WTC11 (cell line): ENCODE measurements at regions of chr3 and their contacts with region 1.

Region 1: DNA sequence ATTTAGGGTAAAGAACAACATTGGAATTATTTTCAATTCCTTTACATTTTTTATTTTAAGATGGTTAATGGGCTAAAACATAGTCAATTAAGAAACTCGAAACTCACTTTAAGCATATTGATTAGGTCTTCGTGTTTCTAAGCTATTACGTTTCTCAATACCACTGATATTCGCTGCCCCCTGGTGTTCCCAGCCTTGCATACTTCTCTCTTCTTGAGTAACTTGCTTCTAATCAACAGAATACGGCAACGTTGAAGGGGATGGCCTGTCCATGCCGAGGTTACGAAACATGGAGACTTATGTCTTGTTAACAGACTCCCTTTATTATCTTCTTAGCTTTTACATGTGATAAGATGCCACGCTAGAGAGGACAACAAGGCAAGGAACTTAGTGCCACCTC is 43.6 kb downstream of the ROBO1 start:
- DNase-seq: peak; percentile 53
- ATAC-seq: peak; percentile 59
- H3K4me3 Mint-ChIP-seq: no peak overlapping the region
- H3K27ac Mint-ChIP-seq: no peak overlapping the region
- H3K4me1 Mint-ChIP-seq: peaks cover 5% of the 10 kb centered on the region
- H3K27me3 Mint-ChIP-seq: no peaks in the 10 kb centered on the region
- CTCF ChIP-seq: no peak

Region 2: GRCh38 chr3:79521238-79521848 is 202.9 kb before region 1 on chr3:
- CTCF ChIA-PET with region 1: interaction called, 23 read pairs
- POLR2A ChIA-PET with region 1: no interaction called
- DNase-seq: no peak
- ATAC-seq: peak; percentile 41; the same call in 1 of the 2 replicates
- H3K4me3 Mint-ChIP-seq: no peak overlapping the region
- H3K27ac Mint-ChIP-seq: no peak overlapping the region
- H3K4me1 Mint-ChIP-seq: peaks cover 17% of the 10 kb centered on the region
- H3K27me3 Mint-ChIP-seq: no peaks in the 10 kb centered on the region
- CTCF ChIP-seq: peak; percentile 73

Region 3: DNA sequence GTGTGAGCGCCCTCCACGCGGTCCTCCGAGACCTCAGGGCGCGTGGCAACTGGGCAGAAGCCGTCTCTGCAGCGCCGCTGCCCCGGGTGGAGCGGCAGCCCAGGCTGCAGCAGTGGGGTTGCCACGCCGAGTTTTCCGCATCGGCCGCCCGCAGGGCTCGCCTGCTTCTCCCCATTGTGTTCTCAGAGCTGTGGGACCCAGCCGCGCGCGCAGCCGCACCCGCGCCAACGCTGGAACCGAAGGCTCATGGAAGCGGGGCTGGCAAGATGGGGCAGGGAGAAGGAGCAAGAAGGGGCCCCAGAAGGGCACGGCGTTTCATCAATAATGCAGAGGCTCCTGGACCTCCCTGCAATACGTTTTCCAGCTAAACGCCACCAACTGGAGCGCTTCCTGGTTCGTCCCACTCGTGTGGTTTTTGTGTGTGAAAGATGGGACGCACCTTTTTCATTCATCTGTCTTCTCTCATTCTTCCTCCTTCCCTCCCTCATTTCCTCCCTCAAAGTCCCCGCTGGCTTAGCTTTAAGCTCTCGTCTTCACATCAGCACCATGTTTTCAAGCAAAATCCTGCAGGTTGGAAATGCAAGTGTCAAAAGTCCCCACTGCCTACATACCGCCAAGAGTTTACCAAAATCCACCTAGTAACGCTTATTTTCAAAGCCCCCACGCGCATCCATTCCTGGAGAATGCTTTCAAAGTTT is 42.4 kb after region 1 on chr3:
- CTCF ChIA-PET with region 1: no interaction called
- POLR2A ChIA-PET with region 1: no interaction called
- DNase-seq: no peak
- ATAC-seq: peak; percentile 16
- H3K4me3 Mint-ChIP-seq: no peak overlapping the region
- H3K27ac Mint-ChIP-seq: no peak overlapping the region
- H3K4me1 Mint-ChIP-seq: peaks cover 15% of the 10 kb centered on the region
- H3K27me3 Mint-ChIP-seq: peaks cover 7% of the 10 kb centered on the region
- CTCF ChIP-seq: no peak

Region 4: DNA sequence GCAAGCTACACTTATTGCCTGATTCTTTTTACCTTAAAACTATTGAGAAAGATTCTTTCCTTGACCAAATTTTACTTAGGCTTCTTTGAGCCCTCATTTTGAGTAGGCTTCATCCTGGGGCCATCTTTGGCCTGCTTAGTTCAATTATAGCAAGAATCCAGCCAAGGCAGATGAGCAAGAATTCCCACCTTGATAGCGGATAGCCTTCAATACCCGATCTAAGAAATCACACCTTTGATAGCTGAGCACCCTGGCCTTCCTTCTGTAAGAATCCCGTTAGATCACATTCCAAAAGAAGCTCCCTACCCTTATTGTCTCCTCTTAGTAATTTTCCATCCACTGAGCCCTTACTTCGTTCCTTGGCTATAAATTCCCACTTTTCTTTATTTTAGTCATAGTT is 319.0 kb after region 1 on chr3:
- CTCF ChIA-PET with region 1: no interaction called
- POLR2A ChIA-PET with region 1: no interaction called
- DNase-seq: no peak
- ATAC-seq: peak; percentile 53
- H3K4me3 Mint-ChIP-seq: no peak overlapping the region
- H3K27ac Mint-ChIP-seq: no peak overlapping the region; the same call in 1 of the 2 replicates
- H3K4me1 Mint-ChIP-seq: peaks cover 8% of the 10 kb centered on the region
- H3K27me3 Mint-ChIP-seq: no peaks in the 10 kb centered on the region
- CTCF ChIP-seq: no peak